Activated naive CD8-positive, alpha-beta T cell treated with anti-CD3 and anti-CD28 coated beads, Interleukin-2, amount 10 ng/mL, durations not matched to agents 7 days and 5 days (primary cell): ENCODE measurements at regions of chr6 and their contacts with region 1.

Region 1: DNA sequence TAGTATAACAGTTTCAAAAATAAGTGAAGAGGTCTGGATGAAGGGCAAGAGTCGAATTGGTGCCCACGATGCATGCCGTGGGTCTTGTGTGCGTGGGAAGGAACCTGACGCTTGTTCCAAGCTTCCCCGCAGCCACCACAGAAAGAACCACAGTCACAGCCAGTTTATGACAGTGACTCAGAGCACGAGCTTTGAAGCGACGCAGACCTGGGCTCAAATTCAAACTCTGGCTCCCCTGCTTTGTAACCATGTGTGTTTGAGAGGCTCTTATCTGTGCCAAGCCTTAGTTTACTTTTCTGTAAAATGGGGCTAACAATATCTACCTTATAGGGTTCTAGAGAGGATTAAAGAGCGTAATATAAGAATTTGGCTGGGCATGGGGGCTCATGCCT is 65.5 kb downstream of the SYNJ2 start:
- DNase-seq: peak; percentile 70
- ATAC-seq: peak; percentile 68
- H3K4me3 Mint-ChIP-seq: peak overlapping the region; percentile 62
- H3K27ac Mint-ChIP-seq: peak overlapping the region; percentile 91
- H3K4me1 Mint-ChIP-seq: peaks cover 25% of the 10 kb centered on the region
- H3K27me3 Mint-ChIP-seq: no peaks in the 10 kb centered on the region

Region 2: GRCh38 chr6:158026054-158026900 is 20.8 kb before region 1 on chr6:
- POLR2A ChIA-PET with region 1: interaction called, 17 read pairs
- DNase-seq: peak; percentile 88
- ATAC-seq: peak; percentile 81
- H3K4me3 Mint-ChIP-seq: peak overlapping the region; percentile 88
- H3K27ac Mint-ChIP-seq: peak overlapping the region; percentile 99
- H3K4me1 Mint-ChIP-seq: peaks cover 40% of the 10 kb centered on the region
- H3K27me3 Mint-ChIP-seq: no peaks in the 10 kb centered on the region

Region 3: GRCh38 chr6:158031381-158032353 is 15.5 kb before region 1 on chr6:
- POLR2A ChIA-PET with region 1: interaction called, 17 read pairs
- DNase-seq: peak; percentile 71
- ATAC-seq: peak; percentile 48
- H3K4me3 Mint-ChIP-seq: peak overlapping the region; percentile 16
- H3K27ac Mint-ChIP-seq: peak overlapping the region; percentile 69
- H3K4me1 Mint-ChIP-seq: peaks cover 38% of the 10 kb centered on the region
- H3K27me3 Mint-ChIP-seq: no peaks in the 10 kb centered on the region

Region 4: DNA sequence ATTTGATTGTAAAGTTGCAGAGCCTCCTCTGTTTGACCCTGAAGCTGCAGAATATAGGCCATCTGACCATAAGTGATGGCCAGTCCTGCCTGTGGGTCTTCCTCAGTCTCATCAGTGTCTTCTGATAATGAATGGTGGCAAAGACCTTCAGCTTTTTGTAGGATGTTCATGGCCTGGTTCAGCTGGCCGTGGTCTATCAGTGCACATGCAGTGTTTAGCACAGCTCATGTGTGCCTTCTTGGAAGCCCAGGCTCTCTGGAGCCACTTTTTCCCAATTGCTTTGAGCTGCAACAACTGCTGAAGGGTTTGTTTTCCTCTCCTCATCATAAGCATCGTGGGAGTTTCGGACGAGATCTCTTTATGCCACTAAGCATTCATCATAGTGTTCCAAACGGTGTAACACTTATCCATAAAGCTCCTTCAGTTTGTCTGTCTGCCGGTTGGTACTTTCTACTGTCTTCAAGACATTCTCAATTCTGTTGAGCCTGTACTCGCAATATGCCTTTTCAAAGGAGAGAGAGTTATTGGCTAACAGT is 195.0 kb after region 1 on chr6:
- POLR2A ChIA-PET with region 1: no interaction called
- DNase-seq: no peak
- ATAC-seq: peak; percentile 27
- H3K4me3 Mint-ChIP-seq: peak overlapping the region; percentile 55
- H3K27ac Mint-ChIP-seq: peak overlapping the region; percentile 83
- H3K4me1 Mint-ChIP-seq: peaks cover 24% of the 10 kb centered on the region
- H3K27me3 Mint-ChIP-seq: no peaks in the 10 kb centered on the region